ENCODE measurements at regions of chr20 and their contacts with region 1.

Region 1: DNA sequence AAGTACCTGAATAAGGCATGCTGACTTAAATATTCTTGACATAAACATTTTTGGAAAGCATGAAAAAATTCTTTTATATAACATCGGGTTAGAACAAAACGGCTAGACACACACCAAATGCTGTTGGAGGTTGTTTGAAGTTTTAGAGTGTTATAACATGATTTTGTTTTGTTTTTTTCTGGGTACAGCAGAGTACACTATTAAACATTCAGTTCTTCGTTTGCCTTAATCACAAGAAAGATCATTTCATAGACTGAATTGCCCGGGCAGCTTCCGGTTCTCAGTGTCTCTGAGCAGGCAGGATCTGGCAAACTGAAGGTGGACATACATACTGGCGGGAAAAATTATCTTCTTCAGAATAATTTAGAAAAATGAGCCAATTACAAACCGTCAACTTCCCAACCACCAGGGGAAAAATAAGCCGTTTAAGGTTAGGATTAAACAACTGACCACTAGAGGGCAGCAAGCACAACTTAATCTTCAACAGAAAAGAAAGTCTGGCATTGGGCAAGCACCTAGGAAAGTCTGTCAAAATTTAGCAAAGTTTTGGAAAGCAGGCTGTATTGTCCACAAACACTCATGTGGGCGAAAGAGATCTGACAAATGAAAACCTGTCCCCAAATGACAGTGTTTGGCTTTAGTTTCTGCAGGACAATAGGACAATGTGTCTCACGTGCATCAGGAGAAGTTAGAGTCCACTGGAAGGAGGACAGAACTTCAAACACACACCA is 15.0 kb downstream of the ZNF217 start:
- DNase-seq: peak; percentile 94
- ATAC-seq: peak; percentile 45
- H3K4me3 ChIP-seq: peak overlapping the region; percentile 12 to 43 (median 38); a peak in 4 of 6 replicates
- H3K27ac ChIP-seq: peak overlapping the region; percentile 77
- H3K4me1 ChIP-seq: peaks cover 63% of the 10 kb centered on the region
- H3K27me3 ChIP-seq: no peaks in the 10 kb centered on the region
- CTCF ChIP-seq: peak; percentile 93
- EP300 ChIP-seq: peak in 1 of 2 experiments; percentile 33; a peak in 1 of 4 replicates
- POLR2A ChIP-seq: peak in 1 of 2 experiments; percentile 34; a peak in 1 of 4 replicates
- RAD21 ChIP-seq: peak; percentile 96

Region 2: GRCh38 chr20:53594068-53595017 is 15.7 kb after region 1 on chr20:
- CTCF ChIA-PET with region 1: interaction called, 18 read pairs
- POLR2A ChIA-PET with region 1: interaction called, 164 read pairs
- in situ Hi-C with region 1: no loop called
- intact Hi-C with region 1: loop called (anchors 1 kb)
- DNase-seq: peak; percentile 89
- ATAC-seq: peak; percentile 88
- H3K4me3 ChIP-seq: peak overlapping the region; percentile 89 to 98 (median 90)
- H3K27ac ChIP-seq: peak overlapping the region; percentile 87
- H3K4me1 ChIP-seq: peaks cover 43% of the 10 kb centered on the region
- H3K27me3 ChIP-seq: no peaks in the 10 kb centered on the region; a peak in 1 of 5 replicates
- CTCF ChIP-seq: peak; percentile 88
- EP300 ChIP-seq: peak in 1 of 2 experiments; percentile 14; a peak in 1 of 4 replicates
- POLR2A ChIP-seq: peak; percentile 52 to 60
- RAD21 ChIP-seq: peak; percentile 91

Region 3: GRCh38 chr20:53677447-53678314 is 99.0 kb after region 1 on chr20:
- CTCF ChIA-PET with region 1: interaction called, 11 read pairs
- POLR2A ChIA-PET with region 1: interaction called, 15 read pairs
- in situ Hi-C with region 1: no loop called
- intact Hi-C with region 1: loop called (anchors 1 kb)
- DNase-seq: peak; percentile 92
- ATAC-seq: peak; percentile 97
- H3K4me3 ChIP-seq: peak overlapping the region; percentile 45 to 70 (median 67)
- H3K27ac ChIP-seq: peak overlapping the region; percentile 90
- H3K4me1 ChIP-seq: peaks cover 62% of the 10 kb centered on the region
- H3K27me3 ChIP-seq: no peaks in the 10 kb centered on the region
- CTCF ChIP-seq: peak; percentile 77
- EP300 ChIP-seq: peak; percentile 7 to 80; a peak in 3 of 4 replicates
- POLR2A ChIP-seq: peak in 1 of 2 experiments; percentile 47; a peak in 2 of 4 replicates
- RAD21 ChIP-seq: peak; percentile 91

Region 4: DNA sequence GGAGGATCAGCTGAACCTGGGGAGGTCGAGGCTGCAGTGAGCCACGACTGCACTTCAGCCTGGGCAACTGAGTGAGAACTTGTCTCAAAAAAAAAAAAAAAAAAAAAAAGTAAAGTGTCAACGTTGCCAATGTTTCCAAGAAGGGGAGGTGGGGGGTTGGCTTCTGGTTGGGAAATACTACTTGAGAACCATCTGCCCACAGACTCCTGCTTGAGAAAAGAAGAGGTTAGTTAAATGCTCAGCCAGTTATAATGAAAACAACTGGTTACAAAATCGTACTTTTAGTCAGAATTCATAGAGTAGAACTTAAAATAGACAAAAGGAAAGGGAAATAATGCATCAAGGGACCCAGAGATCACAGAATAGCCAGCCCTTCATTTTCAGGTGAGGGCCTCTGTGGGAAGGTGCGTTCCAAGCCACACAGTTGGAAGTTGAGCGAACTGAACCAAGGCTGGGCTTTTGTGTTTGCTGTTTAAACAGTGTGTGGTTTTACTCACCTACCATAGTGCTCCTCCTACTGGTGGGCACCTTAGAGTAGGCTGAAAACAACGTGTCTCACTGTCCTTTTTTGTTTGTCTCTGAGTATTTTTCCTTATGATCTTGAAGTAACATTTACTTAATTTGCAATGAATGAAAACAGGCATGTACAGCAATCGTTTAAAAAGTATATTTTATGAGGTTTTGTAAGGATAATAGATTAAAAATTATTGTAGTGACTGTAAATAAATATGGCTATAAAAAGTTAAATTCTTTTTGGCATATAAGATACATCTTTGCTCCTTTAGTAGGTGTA is 291.0 kb after region 1 on chr20:
- CTCF ChIA-PET with region 1: interaction called, 39 read pairs
- POLR2A ChIA-PET with region 1: interaction called, 15 read pairs
- in situ Hi-C with region 1: loop called (anchors 5 kb)
- intact Hi-C with region 1: loop called (anchors 1 kb)
- DNase-seq: peak; percentile 96
- ATAC-seq: peak; percentile 92
- H3K4me3 ChIP-seq: peak overlapping the region in 2 of 3 experiments; percentile 8; a peak in 2 of 6 replicates
- H3K27ac ChIP-seq: peak overlapping the region; percentile 37
- H3K4me1 ChIP-seq: peaks cover 77% of the 10 kb centered on the region
- H3K27me3 ChIP-seq: no peaks in the 10 kb centered on the region
- CTCF ChIP-seq: peak; percentile 99
- EP300 ChIP-seq: peak in 1 of 2 experiments; percentile 79; a peak in 3 of 4 replicates
- POLR2A ChIP-seq: no peak
- RAD21 ChIP-seq: peak; percentile 97

Region 5: DNA sequence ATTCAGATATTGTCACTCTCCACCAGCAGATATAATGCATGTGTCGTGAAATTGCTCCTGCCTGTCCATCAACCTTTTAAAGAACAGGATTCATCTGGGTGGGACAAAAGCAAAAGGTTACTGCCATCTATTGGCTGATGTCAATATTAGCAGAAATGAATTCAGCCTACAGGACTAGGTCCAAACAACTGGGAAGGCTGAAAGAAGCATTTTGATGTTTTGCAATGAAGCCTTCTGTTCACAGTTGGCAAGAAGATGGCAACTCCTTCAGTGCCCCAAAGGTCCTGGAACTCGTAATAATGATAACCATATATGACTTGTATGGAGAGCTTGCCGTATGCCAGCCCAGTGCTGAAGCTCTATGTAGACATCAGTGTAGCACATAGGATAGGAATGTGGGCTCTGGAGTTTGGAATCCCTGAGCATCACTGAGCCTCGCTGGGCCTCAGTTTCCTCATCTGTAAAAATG is 484.2 kb after region 1 on chr20:
- CTCF ChIA-PET with region 1: interaction called, 4 read pairs
- POLR2A ChIA-PET with region 1: interaction called, 9 read pairs
- in situ Hi-C with region 1: loop called (anchors 10 kb)
- intact Hi-C with region 1: loop called (anchors 2 kb)
- DNase-seq: peak; percentile 70
- ATAC-seq: peak; percentile 64
- H3K4me3 ChIP-seq: no peak overlapping the region
- H3K27ac ChIP-seq: no peak overlapping the region
- H3K4me1 ChIP-seq: peaks cover 16% of the 10 kb centered on the region
- H3K27me3 ChIP-seq: no peaks in the 10 kb centered on the region; a peak in 1 of 5 replicates
- CTCF ChIP-seq: peak; percentile 91
- EP300 ChIP-seq: no peak
- POLR2A ChIP-seq: no peak
- RAD21 ChIP-seq: peak; percentile 80

Region 6: GRCh38 chr20:54199721-54200176 is 621.1 kb after region 1 on chr20:
- CTCF ChIA-PET with region 1: interaction called, 6 read pairs
- POLR2A ChIA-PET with region 1: interaction called, 3 read pairs
- in situ Hi-C with region 1: loop called (anchors 10 kb)
- intact Hi-C with region 1: loop called (anchors 2 kb)
- DNase-seq: peak; percentile 82
- ATAC-seq: no peak
- H3K4me3 ChIP-seq: no peak overlapping the region
- H3K27ac ChIP-seq: no peak overlapping the region
- H3K4me1 ChIP-seq: peaks cover 51% of the 10 kb centered on the region
- H3K27me3 ChIP-seq: peaks cover 0 to 11% of the 10 kb centered on the region in 2 experiments; a peak in 1 of 5 replicates
- CTCF ChIP-seq: peak; percentile 95
- EP300 ChIP-seq: no peak
- POLR2A ChIP-seq: no peak
- RAD21 ChIP-seq: peak; percentile 97

Measured in HepG2 (cell line).